Heart right ventricle (tissue), 16 donors: ENCODE measurements at regions of chr1 and their contacts with region 1.

Region 1: GRCh38 chr1:52601991-52602855 is at the start of gene GPX7:
- DNase-seq: peak; percentile 39 to 49
- ATAC-seq: peak; percentile 57 to 83 (median 71)
- H3K4me3 ChIP-seq: peak within 1 kb of the TSS; percentile 44 to 69 (median 60)
- H3K27ac ChIP-seq: peak within 1 kb of the TSS; percentile 70 to 92 (median 84)
- H3K4me1 ChIP-seq: peaks cover 3 to 42% (median 27%) of the 10 kb centered on the region in 9 donors
- H3K27me3 ChIP-seq: no peaks in the 10 kb centered on the region
- CTCF ChIP-seq: no peak
- total RNA-seq, gene GPX7: 3.3 to 14.6 (median 6.5) TPM

Region 2: GRCh38 chr1:52413410-52413989 is 188.7 kb before region 1 on chr1:
- intact Hi-C with region 1: no loop called
- DNase-seq: no peak
- ATAC-seq: no peak
- H3K4me3 ChIP-seq: no peak overlapping the region
- H3K27ac ChIP-seq: no peak overlapping the region
- H3K4me1 ChIP-seq: no peaks in the 10 kb centered on the region
- H3K27me3 ChIP-seq: no peaks in the 10 kb centered on the region
- CTCF ChIP-seq: no peak

Region 3: GRCh38 chr1:52636721-52637695 is 34.8 kb after region 1 on chr1:
- intact Hi-C with region 1: loop called in 1 of 10 experiments (anchors 2 kb)
- DNase-seq: no peak
- ATAC-seq: peak in 5 of 8 donors; percentile 18 to 62 (median 46)
- H3K4me3 ChIP-seq: peak overlapping the region in 1 of 10 donors; percentile 17
- H3K27ac ChIP-seq: peak overlapping the region in 3 of 10 donors; percentile 14 to 89 (median 25)
- H3K4me1 ChIP-seq: peaks cover 0 to 37% (median 8%) of the 10 kb centered on the region in 9 donors
- H3K27me3 ChIP-seq: peaks cover 11 to 26% (median 22%) of the 10 kb centered on the region in 7 donors
- CTCF ChIP-seq: no peak